Uterus (tissue), 4 donors: ENCODE measurements at regions of chr12 and their contacts with region 1.

Region 1: DNA sequence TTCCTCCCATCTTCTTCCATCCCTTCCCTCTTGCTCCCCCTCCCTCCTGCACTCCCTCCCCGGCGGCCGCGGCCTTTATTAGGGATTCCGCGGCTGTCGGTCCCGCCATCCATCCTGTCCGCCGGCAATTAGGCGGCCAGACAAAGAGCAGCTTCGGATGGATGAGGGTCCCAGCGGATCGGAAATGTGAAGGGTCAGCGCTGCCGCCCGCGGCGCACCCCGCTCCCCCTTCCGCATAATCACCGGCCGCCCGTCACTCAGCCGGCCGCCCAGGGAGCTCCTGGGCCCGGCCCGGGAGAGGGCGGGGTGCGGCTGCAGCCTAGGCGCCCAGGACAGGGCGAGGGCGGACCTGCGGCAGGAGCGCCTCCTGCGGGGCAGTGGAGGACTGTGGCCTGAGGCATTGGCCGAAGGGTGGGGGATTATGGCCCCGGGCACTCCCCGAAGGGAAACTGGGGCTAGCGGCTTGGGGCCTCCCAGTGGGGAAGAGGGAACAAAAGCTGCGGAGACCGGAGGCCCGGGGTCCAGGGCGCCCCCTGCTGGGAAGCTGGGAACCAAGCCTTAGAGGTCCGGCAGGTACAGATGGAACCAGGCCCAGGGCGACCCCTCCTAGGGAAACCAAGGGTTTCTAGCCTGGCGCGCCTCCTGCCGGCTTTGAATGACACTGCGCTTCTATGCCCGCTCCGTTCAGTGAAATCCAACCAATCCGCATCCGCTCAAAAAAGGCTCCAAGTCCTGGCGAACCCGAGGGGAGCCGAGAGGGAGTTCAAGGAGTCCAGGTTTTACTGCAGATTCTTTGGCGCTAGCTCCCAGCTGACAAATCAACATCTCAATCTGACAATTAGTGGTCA is 4.4 kb upstream of the DNAJC22 start:
- DNase-seq: peak; percentile 68 to 73
- H3K4me3 ChIP-seq: peak overlapping the region; percentile 23 to 37
- H3K27ac ChIP-seq: peak overlapping the region in 1 of 2 donors; percentile 33
- H3K4me1 ChIP-seq: peaks cover 7 to 33% of the 10 kb centered on the region in 2 donors
- H3K27me3 ChIP-seq: peaks cover 14 to 32% of the 10 kb centered on the region in 2 donors
- CTCF ChIP-seq: peak; percentile 57 to 81 (median 72)
- POLR2A ChIP-seq: no peak

Region 2: DNA sequence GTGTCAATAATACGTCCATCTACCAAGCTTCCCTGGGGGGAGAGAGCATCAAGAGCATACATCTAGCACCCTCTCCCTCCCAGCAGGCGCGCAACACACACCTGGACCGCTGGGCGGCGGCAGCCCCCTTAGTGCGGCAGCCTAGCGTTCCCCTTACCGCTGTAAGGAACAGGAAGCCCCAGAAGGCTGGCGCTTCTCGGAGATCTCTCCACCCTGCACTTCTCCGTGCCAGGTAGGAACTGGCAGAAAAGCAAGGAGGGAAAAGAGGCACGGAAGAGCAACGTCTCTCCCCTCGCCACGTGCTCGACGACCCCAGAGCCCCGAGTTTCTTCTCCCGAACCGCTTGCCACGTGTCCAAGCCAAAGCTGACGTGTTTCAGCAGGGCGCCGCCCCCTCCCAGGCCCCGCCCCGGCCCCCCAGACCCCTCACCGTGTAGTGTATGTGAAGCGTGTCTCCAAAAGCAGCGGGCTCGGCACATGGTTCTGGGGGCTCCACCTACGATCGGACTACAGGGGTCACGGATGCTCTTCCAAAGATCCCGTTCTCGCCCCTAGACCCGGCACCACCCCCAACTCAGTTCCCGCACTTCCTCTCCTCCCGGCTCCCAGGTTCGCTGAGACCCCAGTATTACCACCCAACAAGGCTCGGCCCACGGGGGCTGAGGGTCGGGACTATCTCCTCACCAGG is 417.5 kb before region 1 on chr12:
- intact Hi-C with region 1: no loop called
- DNase-seq: peak; percentile 41 to 51
- H3K4me3 ChIP-seq: peak overlapping the region; percentile 79 to 82
- H3K27ac ChIP-seq: peak overlapping the region; percentile 42 to 48
- H3K4me1 ChIP-seq: peaks cover 0 to 3% of the 10 kb centered on the region in 2 donors
- H3K27me3 ChIP-seq: no peaks in the 10 kb centered on the region
- CTCF ChIP-seq: peak; percentile 44 to 64 (median 61)
- POLR2A ChIP-seq: no peak

Region 3: GRCh38 chr12:49288412-49288853 is 53.9 kb before region 1 on chr12:
- intact Hi-C with region 1: loop called (anchors 10 kb)
- DNase-seq: peak; percentile 38 to 57
- H3K4me3 ChIP-seq: no peak overlapping the region
- H3K27ac ChIP-seq: no peak overlapping the region
- H3K4me1 ChIP-seq: peaks cover 0 to 5% of the 10 kb centered on the region in 2 donors
- H3K27me3 ChIP-seq: no peaks in the 10 kb centered on the region
- CTCF ChIP-seq: peak; percentile 69 to 84 (median 76)
- POLR2A ChIP-seq: no peak

Region 4: GRCh38 chr12:49413796-49414195 is 71.5 kb after region 1 on chr12:
- intact Hi-C with region 1: no loop called
- DNase-seq: no peak
- H3K4me3 ChIP-seq: no peak overlapping the region
- H3K27ac ChIP-seq: no peak overlapping the region
- H3K4me1 ChIP-seq: no peaks in the 10 kb centered on the region
- H3K27me3 ChIP-seq: no peaks in the 10 kb centered on the region
- CTCF ChIP-seq: no peak
- POLR2A ChIP-seq: no peak